ENCODE measurements at regions of chr1 and their contacts with region 1.

Region 1: GRCh38 chr1:100440075-100440809 is 87.9 kb downstream of the CDC14A start:
- DNase-seq: peak; percentile 58 to 89 (median 81)
- H3K4me3 ChIP-seq: no peak overlapping the region
- H3K4me3 Mint-ChIP-seq: peak overlapping the region; percentile 19 to 71 (median 60)
- H3K27ac ChIP-seq: peak overlapping the region; percentile 33
- H3K27ac Mint-ChIP-seq: peak overlapping the region; percentile 90 to 96 (median 94)
- H3K4me1 ChIP-seq: peaks cover 90% of the 10 kb centered on the region
- H3K4me1 Mint-ChIP-seq: peaks cover 68 to 89% (median 88%) of the 10 kb centered on the region in 3 donors
- H3K27me3 ChIP-seq: no peaks in the 10 kb centered on the region
- H3K27me3 Mint-ChIP-seq: no peaks in the 10 kb centered on the region

Region 2: GRCh38 chr1:100423832-100424337 is 16.4 kb before region 1 on chr1:
- CTCF ChIA-PET with region 1: interaction called, 8 read pairs
- POLR2A ChIA-PET with region 1: interaction called, 19 read pairs
- DNase-seq: peak in 1 of 5 donors; percentile 64
- H3K4me3 ChIP-seq: peak overlapping the region; percentile 35
- H3K4me3 Mint-ChIP-seq: peak overlapping the region; percentile 84 to 95 (median 91)
- H3K27ac ChIP-seq: peak overlapping the region; percentile 66
- H3K27ac Mint-ChIP-seq: peak overlapping the region; percentile 83 to 99 (median 96)
- H3K4me1 ChIP-seq: peaks cover 42% of the 10 kb centered on the region
- H3K4me1 Mint-ChIP-seq: peaks cover 71 to 92% (median 89%) of the 10 kb centered on the region in 3 donors
- H3K27me3 ChIP-seq: no peaks in the 10 kb centered on the region
- H3K27me3 Mint-ChIP-seq: no peaks in the 10 kb centered on the region

Measured in CD8-positive, alpha-beta memory T cell (primary cell).